ENCODE measurements at regions of chr15 and their contacts with region 1.

Region 1: GRCh38 chr15:71437404-71438318 is 322.4 kb downstream of the THSD4 start:
- DNase-seq: no peak
- H3K4me3 ChIP-seq: no peak overlapping the region
- H3K27ac ChIP-seq: no peak overlapping the region
- H3K4me1 ChIP-seq: peaks cover 7% of the 10 kb centered on the region
- H3K27me3 ChIP-seq: no peaks in the 10 kb centered on the region
- CTCF ChIP-seq: no peak

Region 2: GRCh38 chr15:71252044-71252906 is 185.4 kb before region 1 on chr15:
- intact Hi-C with region 1: no loop called
- DNase-seq: no peak
- H3K4me3 ChIP-seq: no peak overlapping the region
- H3K27ac ChIP-seq: peak overlapping the region; percentile 66
- H3K4me1 ChIP-seq: peaks cover 56% of the 10 kb centered on the region
- H3K27me3 ChIP-seq: no peaks in the 10 kb centered on the region
- CTCF ChIP-seq: no peak

Region 3: DNA sequence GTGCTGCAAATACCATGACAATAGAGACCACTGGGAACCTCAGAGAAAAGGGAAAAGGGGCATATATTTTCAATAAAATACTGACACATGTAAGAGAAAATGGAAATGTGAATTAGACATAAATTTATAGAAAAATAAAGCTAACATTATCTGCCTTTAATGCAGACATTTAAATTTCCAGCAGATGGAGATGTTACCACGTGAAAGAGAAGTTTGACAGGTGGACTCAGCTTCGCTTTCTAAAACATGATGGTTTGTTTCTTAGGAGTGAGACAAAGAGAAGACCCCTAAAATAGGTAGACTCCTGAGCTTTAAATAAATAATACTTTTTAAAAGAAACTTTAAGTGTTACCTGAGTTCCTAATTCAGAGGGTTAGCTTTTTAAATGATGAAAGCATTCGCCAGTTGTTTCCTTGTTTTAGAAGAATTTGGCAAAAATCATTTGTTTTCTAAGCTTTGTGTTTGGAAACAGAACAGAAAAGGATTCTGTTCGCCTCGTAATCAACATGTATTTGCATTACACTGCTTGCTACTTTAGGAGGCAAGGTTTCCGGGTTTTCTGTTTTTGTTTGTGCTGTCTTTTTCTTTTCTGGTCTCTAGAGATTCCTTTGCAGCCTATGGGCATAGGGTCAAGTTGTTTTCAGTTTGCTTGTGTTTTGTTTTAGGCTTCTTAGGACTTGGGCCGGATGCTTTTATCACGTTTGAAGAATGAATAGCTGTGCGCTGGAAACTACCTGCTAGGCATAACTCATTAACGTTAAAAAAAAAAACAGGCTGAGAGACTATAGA is 51.0 kb before region 1 on chr15:
- intact Hi-C with region 1: loop called (anchors 5 kb)
- DNase-seq: no peak
- H3K4me3 ChIP-seq: no peak overlapping the region
- H3K27ac ChIP-seq: peak overlapping the region; percentile 58
- H3K4me1 ChIP-seq: peaks cover 57% of the 10 kb centered on the region
- H3K27me3 ChIP-seq: no peaks in the 10 kb centered on the region
- CTCF ChIP-seq: peak; percentile 65